Activated CD4-positive, alpha-beta T cell treated with anti-CD3 and anti-CD28 coated beads for 36 hours (primary cell): ENCODE measurements at regions of chr11 and their contacts with region 1.

Region 1: DNA sequence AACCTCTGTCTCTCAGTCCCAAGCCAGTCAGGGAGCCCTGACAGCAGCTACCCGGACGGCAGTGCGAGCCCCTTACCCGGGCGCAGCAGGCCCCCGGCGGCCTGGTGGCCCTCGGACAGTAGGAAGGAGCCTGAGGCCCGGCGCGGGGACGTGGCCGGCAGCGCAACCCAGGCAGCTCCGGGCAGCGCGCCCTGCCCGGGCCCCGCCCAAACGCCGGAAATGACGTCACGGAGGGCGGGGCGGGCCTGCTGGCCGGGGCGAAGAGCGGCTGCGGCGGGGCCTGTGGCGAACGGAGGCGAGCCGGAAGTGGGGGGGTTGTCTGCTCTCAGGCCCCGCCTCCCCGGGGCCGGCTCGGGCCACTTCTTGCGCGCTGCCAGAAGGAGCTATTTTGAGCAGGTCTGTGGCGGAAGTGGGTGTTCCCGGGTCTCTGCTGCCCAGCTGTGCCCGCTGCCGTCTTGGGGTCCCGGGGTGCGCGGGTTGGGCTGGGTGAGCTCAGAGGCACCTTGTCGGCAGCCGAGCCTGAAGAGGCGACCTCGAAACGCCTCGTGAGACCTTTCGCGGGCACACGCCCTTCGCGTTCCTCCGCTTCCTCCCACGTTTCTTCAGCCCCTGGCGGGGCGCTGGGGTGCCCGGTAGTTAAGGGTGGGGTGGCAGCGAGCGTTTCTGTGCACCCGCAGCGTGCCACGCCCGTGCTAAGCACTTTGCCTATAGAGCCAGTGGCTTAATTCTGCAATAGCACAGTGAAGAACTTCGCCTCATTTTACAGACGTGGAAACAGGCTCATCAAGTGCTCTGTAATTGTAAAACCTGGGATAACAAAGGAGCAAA is at the start of gene C11orf24:
- DNase-seq: peak; percentile 97
- ATAC-seq: peak; percentile 97
- H3K4me3 Mint-ChIP-seq: peak within 1 kb of the TSS; percentile 91
- H3K27ac Mint-ChIP-seq: peak within 1 kb of the TSS; percentile 95
- H3K4me1 Mint-ChIP-seq: peaks cover 30% of the 10 kb centered on the region
- H3K27me3 Mint-ChIP-seq: no peaks in the 10 kb centered on the region
- total RNA-seq, gene C11orf24: 29.4 to 37.4 TPM

Region 2: DNA sequence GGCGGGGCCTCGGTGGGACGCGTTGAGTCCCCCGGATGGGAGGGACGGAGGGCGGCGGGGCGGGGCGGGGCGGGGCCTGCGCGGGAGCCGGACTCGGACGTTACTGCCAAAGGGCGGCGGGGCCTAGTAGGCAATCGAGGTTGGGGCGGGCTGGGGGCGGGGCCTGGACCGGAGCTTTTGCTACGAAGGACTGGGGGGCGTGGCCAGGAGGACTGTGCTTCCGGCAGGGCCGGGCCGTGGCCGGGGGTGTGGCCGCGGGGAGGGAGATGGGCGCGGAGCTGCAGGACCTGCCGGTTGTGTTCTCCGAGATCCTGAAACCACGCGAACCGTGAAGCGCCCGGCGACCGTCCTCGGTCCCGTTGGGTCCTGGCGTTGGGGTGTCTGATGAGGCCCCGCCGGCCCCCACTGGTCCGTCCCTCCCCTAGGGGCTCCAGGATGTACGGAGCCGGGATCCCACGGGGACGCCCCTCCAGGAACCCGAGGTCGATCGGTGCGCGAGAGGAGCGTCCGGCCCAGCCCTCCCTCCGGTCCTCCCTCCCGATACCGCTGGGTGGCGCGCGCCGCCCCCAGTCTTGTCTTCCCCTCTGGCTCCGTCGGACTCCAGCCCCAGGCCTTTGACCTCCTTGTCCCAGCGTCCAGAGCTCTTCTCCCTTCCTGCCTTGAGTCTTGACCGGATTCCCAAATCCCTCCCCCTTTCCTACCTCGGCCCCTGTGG is 641.6 kb before region 1 on chr11:
- CTCF ChIA-PET with region 1: no interaction called
- POLR2A ChIA-PET with region 1: no interaction called
- intact Hi-C with region 1: no loop called
- DNase-seq: peak; percentile 99
- ATAC-seq: peak; percentile 79
- H3K4me3 Mint-ChIP-seq: peak overlapping the region; percentile 79
- H3K27ac Mint-ChIP-seq: peak overlapping the region; percentile 73
- H3K4me1 Mint-ChIP-seq: peaks cover 7% of the 10 kb centered on the region
- H3K27me3 Mint-ChIP-seq: no peaks in the 10 kb centered on the region

Region 3: DNA sequence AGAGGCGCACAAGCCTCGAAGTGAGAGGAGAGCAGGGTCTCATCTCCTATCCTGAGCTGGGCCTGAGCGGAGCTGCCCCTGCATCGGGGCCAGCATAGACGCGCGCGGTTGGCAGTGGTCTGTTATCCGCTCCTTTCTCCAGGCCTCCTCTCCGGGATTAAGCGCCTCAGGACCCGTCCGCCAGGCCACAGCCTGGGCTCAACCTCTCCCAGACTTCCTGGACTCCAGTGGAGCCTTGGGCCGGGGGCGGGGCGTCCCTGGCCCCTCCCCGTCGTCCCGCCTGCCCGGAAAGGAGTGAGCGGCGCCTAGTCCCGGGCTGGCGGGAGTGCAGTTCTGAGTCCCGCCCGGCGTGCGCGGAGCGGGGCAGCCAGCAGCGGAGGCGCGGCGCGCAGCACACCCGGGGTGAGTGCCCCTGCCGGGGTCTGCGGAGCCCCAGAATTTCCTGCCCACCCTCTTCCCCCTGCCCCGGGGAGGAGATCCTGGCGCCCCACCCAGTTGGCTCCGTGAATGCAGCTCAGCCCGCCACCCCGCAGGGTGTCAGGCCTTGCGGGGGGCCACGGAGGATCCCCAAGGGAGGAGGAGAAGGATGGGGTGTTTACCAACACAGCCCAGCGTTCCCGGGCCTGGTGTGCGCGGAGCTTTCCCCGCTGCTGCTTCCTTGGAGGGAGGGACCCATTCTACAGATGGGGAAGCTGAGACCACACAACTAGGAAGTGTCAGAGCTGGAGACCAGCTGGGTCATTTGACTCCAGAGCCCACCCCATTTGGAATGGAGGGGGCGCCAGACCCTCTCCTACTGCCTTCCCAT is 233.1 kb before region 1 on chr11 and contains the start of gene TCIRG1:
- CTCF ChIA-PET with region 1: no interaction called
- POLR2A ChIA-PET with region 1: no interaction called
- intact Hi-C with region 1: loop called in 1 of 2 experiments (anchors 1 kb)
- DNase-seq: peak; percentile 82
- ATAC-seq: peak; percentile 76
- H3K4me3 Mint-ChIP-seq: peak within 1 kb of the TSS; percentile 88
- H3K27ac Mint-ChIP-seq: peak within 1 kb of the TSS; percentile 90
- H3K4me1 Mint-ChIP-seq: peaks cover 18% of the 10 kb centered on the region
- H3K27me3 Mint-ChIP-seq: no peaks in the 10 kb centered on the region
- total RNA-seq, gene TCIRG1: 117 to 151 TPM

Region 4: GRCh38 chr11:68213555-68214174 is 58.3 kb before region 1 on chr11:
- CTCF ChIA-PET with region 1: interaction called, 5 read pairs
- POLR2A ChIA-PET with region 1: no interaction called
- intact Hi-C with region 1: loop called in 1 of 2 experiments (anchors 1 kb)
- DNase-seq: peak; percentile 87
- ATAC-seq: peak; percentile 41
- H3K4me3 Mint-ChIP-seq: peak overlapping the region; percentile 71
- H3K27ac Mint-ChIP-seq: no peak overlapping the region
- H3K4me1 Mint-ChIP-seq: peaks cover 47% of the 10 kb centered on the region
- H3K27me3 Mint-ChIP-seq: peaks cover 2% of the 10 kb centered on the region

Region 5: DNA sequence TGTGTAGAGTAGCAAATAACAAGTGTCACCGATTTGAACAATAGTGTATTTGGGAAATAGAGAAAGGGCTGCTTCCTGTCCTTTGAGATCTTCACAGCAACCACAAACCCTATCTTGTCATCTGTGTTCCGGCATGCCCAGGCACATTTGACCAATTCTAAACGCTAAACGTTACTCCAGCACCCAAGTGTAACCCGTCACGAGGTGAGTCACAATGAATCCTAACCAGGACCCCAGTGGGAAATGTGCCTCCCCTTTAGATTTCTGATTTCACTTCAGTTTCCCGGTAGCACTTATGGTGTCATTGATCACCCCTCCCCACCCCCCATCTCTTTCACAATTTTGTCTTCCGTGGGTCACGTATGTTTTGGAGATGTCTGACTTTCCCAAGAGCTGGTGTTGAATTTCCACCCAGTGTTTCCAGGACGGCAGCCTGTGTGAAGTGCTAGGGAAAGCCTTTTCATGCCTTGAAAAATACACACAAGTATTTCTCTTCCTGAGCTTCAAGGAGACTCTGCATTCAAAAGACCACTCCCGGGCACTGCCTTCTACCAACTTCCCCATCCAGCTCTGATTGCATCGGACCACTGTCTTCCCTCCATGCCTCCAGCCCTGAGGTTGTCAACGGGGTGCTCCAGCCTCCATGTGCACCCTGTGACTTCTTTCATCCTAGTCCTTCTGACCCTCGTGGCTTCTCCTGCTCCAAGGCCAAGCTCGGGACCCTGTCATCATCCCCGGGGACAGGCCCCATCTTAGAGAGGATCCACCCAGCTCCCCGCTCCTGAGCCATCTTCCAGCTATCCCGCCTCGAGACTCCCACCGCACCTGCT is 10.4 kb after region 1 on chr11:
- CTCF ChIA-PET with region 1: interaction called, 6 read pairs
- POLR2A ChIA-PET with region 1: interaction called, 3 read pairs
- intact Hi-C with region 1: loop called in 1 of 2 experiments (anchors 1 kb)
- DNase-seq: peak; percentile 67
- ATAC-seq: peak; percentile 95
- H3K4me3 Mint-ChIP-seq: peak overlapping the region; percentile 50
- H3K27ac Mint-ChIP-seq: peak overlapping the region; percentile 81
- H3K4me1 Mint-ChIP-seq: peaks cover 24% of the 10 kb centered on the region
- H3K27me3 Mint-ChIP-seq: peaks cover 10% of the 10 kb centered on the region

Region 6: GRCh38 chr11:68447015-68447801 is 175.2 kb after region 1 on chr11:
- CTCF ChIA-PET with region 1: no interaction called
- POLR2A ChIA-PET with region 1: no interaction called
- intact Hi-C with region 1: loop called in 1 of 2 experiments (anchors 5 kb)
- DNase-seq: peak; percentile 88
- ATAC-seq: peak; percentile 99
- H3K4me3 Mint-ChIP-seq: no peak overlapping the region
- H3K27ac Mint-ChIP-seq: no peak overlapping the region
- H3K4me1 Mint-ChIP-seq: peaks cover 8% of the 10 kb centered on the region
- H3K27me3 Mint-ChIP-seq: no peaks in the 10 kb centered on the region

Region 7: GRCh38 chr11:68903288-68904247 is 631.6 kb after region 1 on chr11 and contains the starts of genes IGHMBP2 and MRPL21:
- CTCF ChIA-PET with region 1: no interaction called
- POLR2A ChIA-PET with region 1: no interaction called
- intact Hi-C with region 1: loop called in 1 of 2 experiments (anchors 1 kb)
- DNase-seq: peak; percentile 93
- ATAC-seq: peak; percentile 94
- H3K4me3 Mint-ChIP-seq: peak within 1 kb of the TSS; percentile 93
- H3K27ac Mint-ChIP-seq: peak within 1 kb of the TSS; percentile 91
- H3K4me1 Mint-ChIP-seq: peaks cover 29% of the 10 kb centered on the region
- H3K27me3 Mint-ChIP-seq: no peaks in the 10 kb centered on the region
- total RNA-seq, gene IGHMBP2: 20.9 to 25.4 TPM
- total RNA-seq, gene MRPL21: 100 to 102 TPM

Region 8: DNA sequence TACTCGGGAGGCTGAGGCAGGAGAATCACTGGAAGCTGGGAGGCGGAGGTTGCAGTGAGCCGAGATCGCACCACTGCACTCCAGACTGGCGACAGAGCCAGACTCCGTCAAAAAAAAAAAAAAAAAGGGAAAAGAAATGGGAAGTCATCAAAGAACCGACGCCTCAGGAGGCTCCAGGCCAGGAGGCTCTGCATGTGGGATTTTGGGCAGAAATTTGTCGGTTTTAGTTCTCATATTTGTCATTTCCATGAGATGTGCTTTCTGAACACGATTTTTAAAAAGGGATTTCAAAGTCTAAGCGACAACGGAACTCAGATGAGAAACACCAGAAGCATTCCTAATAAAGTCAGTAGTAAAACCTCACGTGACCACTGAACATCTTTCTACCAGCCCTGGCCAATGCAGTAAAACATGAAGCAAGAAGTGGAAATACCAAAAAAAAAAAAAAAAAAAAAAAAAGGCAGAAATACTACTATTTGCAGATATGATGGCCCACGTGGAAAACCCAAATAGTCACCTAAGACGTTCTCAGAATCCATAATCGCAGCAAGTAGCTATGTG is 1403.9 kb after region 1 on chr11:
- CTCF ChIA-PET with region 1: no interaction called
- POLR2A ChIA-PET with region 1: no interaction called
- intact Hi-C with region 1: loop called in 1 of 2 experiments (anchors 1 kb)
- DNase-seq: no peak
- ATAC-seq: no peak
- H3K4me3 Mint-ChIP-seq: peak overlapping the region; percentile 89
- H3K27ac Mint-ChIP-seq: no peak overlapping the region
- H3K4me1 Mint-ChIP-seq: peaks cover 20% of the 10 kb centered on the region
- H3K27me3 Mint-ChIP-seq: peaks cover 2% of the 10 kb centered on the region